ENCODE measurements at regions of chr10 and their contacts with region 1.

Region 1: GRCh38 chr10:30591249-30591670 is 38.3 kb downstream of the LYZL2 start:
- DNase-seq: peak; percentile 83
- H3K4me3 Mint-ChIP-seq: no peak overlapping the region
- H3K27ac Mint-ChIP-seq: no peak overlapping the region
- H3K4me1 Mint-ChIP-seq: peaks cover 2% of the 10 kb centered on the region
- H3K27me3 Mint-ChIP-seq: peaks cover 20% of the 10 kb centered on the region

Region 2: DNA sequence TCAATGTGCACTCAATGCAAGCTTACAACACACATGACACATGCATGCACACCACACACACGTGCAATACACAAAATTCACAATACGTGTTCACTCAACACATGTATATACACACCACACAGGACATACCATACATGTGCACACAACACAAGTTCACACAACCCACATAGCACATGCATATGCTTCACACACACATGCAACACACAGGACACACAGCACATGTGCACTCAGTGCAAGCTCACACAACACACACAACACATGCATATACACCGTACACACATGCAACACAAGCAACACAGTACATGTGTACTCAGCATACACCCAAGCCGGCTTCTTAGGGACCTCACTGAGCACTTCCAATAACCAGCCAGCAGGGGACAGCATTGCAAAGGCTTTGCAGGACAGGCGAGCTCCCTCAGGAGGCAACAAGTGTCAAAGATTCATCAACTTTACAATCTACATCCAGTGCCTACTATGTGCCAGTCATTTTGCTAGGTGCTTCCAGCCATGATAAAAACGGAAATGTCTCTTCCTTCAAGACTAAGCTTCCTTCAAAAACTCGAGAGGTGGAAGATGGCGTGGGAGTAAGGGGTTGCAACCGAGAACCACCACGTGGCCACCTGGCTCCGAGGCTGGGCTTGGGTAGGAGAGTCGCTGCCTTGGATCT is 593.0 kb before region 1 on chr10:
- intact Hi-C with region 1: loop called (anchors 1 kb)
- DNase-seq: peak; percentile 94
- H3K4me3 Mint-ChIP-seq: no peak overlapping the region
- H3K27ac Mint-ChIP-seq: peak overlapping the region; percentile 20
- H3K4me1 Mint-ChIP-seq: peaks cover 8% of the 10 kb centered on the region
- H3K27me3 Mint-ChIP-seq: peaks cover 36% of the 10 kb centered on the region

Region 3: GRCh38 chr10:30359373-30360206 is 231.7 kb before region 1 on chr10:
- intact Hi-C with region 1: loop called (anchors 1 kb)
- DNase-seq: peak; percentile 90
- H3K4me3 Mint-ChIP-seq: no peak overlapping the region
- H3K27ac Mint-ChIP-seq: peak overlapping the region; percentile 32
- H3K4me1 Mint-ChIP-seq: peaks cover 6% of the 10 kb centered on the region
- H3K27me3 Mint-ChIP-seq: peaks cover 18% of the 10 kb centered on the region

Region 4: GRCh38 chr10:30392564-30392990 is 198.7 kb before region 1 on chr10:
- intact Hi-C with region 1: loop called (anchors 1 kb)
- DNase-seq: peak; percentile 92
- H3K4me3 Mint-ChIP-seq: peak overlapping the region; percentile 31
- H3K27ac Mint-ChIP-seq: no peak overlapping the region
- H3K4me1 Mint-ChIP-seq: peaks cover 2% of the 10 kb centered on the region
- H3K27me3 Mint-ChIP-seq: peaks cover 22% of the 10 kb centered on the region

Region 5: DNA sequence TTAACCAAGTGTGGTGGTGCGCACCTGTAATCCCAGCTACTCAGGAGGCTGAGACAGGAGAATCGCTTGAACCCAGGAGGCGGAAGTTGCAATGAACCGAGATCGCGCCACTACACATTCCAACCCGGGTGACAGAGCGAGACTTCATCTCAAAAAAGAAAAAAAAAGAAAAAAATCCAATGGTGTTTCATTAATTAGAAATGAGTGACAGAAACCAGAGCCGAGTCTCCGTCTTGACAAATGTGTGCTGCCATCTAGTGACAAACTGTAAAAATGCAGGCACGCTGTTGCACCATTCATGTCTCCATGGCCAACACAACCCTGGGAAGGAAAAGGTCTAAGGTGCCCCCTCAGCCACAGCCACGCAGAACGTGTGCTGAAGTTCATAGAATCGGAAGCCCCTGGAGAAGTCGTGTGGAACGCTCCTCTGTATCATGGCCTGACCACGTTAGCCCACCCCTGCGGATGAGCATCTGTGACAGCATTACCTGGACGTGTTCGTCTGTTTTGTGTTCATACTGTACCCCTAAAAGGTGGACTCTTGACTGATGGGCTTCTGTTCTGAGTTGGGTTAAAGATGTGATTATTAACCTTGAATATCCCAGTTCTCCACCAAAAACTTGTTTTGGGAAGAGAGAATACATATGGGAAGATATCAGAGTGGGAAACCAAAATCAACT is 56.7 kb before region 1 on chr10:
- intact Hi-C with region 1: loop called (anchors 5 kb)
- DNase-seq: peak; percentile 92
- H3K4me3 Mint-ChIP-seq: no peak overlapping the region
- H3K27ac Mint-ChIP-seq: peak overlapping the region; percentile 61
- H3K4me1 Mint-ChIP-seq: peaks cover 40% of the 10 kb centered on the region
- H3K27me3 Mint-ChIP-seq: peaks cover 2% of the 10 kb centered on the region

Region 6: DNA sequence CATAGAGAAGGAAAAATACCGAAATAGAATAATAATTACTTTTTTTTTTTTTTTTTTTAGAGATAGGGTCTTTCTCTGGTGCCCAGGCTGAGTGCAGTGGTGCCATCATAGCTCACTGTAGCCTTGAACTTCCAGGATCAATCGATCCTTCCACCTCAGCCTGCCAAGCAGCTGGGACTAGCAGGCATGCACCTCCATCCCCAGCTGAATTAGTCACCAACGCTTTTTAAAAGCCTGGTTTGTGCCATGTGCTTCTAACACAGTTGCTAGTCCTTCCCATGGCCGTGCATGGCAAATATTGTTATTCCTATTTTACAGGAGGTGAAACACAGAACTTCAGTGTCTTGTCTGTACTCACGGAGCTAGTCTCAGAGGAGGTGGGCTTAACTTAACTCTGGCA is 15.1 kb after region 1 on chr10:
- intact Hi-C with region 1: no loop called
- DNase-seq: no peak
- H3K4me3 Mint-ChIP-seq: no peak overlapping the region
- H3K27ac Mint-ChIP-seq: no peak overlapping the region
- H3K4me1 Mint-ChIP-seq: no peaks in the 10 kb centered on the region
- H3K27me3 Mint-ChIP-seq: peaks cover 16% of the 10 kb centered on the region

Region 7: DNA sequence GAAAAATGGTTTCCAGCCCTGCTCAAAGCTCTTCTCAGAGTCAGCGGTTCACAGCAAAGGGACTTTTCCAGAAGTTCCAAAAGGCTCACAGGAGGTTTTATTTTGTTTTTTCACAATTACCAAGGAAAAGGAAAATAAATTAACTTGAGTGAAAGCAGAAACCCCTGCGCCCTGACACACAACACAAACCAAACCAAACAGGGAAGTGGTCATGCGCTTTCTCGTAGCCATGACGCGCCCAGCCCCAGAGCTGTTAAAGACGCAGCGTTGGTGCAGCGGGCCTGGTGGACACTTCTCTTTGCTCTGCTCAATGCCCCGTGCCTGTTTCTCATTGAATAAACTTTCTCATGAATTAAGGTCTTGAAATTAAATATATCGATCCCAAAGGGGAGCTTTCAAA is 172.7 kb after region 1 on chr10:
- intact Hi-C with region 1: no loop called
- DNase-seq: peak; percentile 71
- H3K4me3 Mint-ChIP-seq: no peak overlapping the region
- H3K27ac Mint-ChIP-seq: peak overlapping the region; percentile 73
- H3K4me1 Mint-ChIP-seq: peaks cover 19% of the 10 kb centered on the region
- H3K27me3 Mint-ChIP-seq: peaks cover 2% of the 10 kb centered on the region

Measured in activated CD4-positive, alpha-beta T cell treated with anti-CD3 and anti-CD28 coated beads, Interleukin-2, amount 10 ng/mL, durations not matched to agents 24 days and 14 days (primary cell).